GM12878 (cell line): ENCODE measurements at regions of chr10 and their contacts with region 1.

Region 1: GRCh38 chr10:74081192-74081803 is 69.3 kb downstream of the AP3M1 start:
- DNase-seq: no peak
- ATAC-seq: peak; percentile 37; the same call in 2 of the 3 replicates
- H3K4me3 ChIP-seq: no peak overlapping the region
- H3K27ac ChIP-seq: no peak overlapping the region
- H3K4me1 ChIP-seq: peaks cover 36% of the 10 kb centered on the region
- H3K27me3 ChIP-seq: no peaks in the 10 kb centered on the region
- CTCF ChIP-seq: peak; percentile 70 to 77 (median 71)
- EP300 ChIP-seq: no peak
- POLR2A ChIP-seq: no peak
- RAD21 ChIP-seq: peak; percentile 83

Region 2: GRCh38 chr10:73946253-73947155 is 134.8 kb before region 1 on chr10:
- CTCF ChIA-PET with region 1: interaction called, 102 read pairs
- POLR2A ChIA-PET with region 1: interaction called, 3 read pairs
- RAD21 ChIA-PET with region 1: interaction called, 18 read pairs
- SMC1A ChIA-PET with region 1: interaction called, 45 read pairs
- in situ Hi-C with region 1: no loop called
- intact Hi-C with region 1: no loop called
- DNase-seq: no peak
- ATAC-seq: no peak
- H3K4me3 ChIP-seq: no peak overlapping the region
- H3K27ac ChIP-seq: no peak overlapping the region
- H3K4me1 ChIP-seq: no peaks in the 10 kb centered on the region
- H3K27me3 ChIP-seq: no peaks in the 10 kb centered on the region
- CTCF ChIP-seq: no peak
- EP300 ChIP-seq: no peak
- POLR2A ChIP-seq: no peak
- RAD21 ChIP-seq: no peak

Region 3: DNA sequence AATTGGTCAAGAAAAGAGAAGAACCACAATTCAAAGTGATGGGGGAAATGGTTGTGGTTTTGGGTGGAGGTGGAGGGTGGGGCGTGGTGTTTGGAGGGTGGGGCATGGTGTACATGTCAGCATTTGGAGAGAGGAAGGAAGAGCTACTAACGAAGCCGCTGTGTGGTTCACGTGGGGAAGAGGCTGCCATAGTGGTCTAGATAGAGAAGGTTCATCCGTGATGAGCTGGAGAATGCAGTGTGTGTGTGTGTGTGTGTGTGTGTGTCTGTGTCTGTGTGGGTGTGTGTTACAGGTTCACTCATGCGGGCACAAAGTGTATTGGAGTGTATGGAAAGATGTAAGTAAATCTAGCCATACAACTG is 89.4 kb before region 1 on chr10:
- CTCF ChIA-PET with region 1: interaction called, 11 read pairs
- POLR2A ChIA-PET with region 1: interaction called, 3 read pairs
- RAD21 ChIA-PET with region 1: interaction called, 5 read pairs
- SMC1A ChIA-PET with region 1: interaction called, 18 read pairs
- in situ Hi-C with region 1: no loop called
- intact Hi-C with region 1: no loop called
- DNase-seq: no peak
- ATAC-seq: peak; percentile 96
- H3K4me3 ChIP-seq: no peak overlapping the region
- H3K27ac ChIP-seq: no peak overlapping the region
- H3K4me1 ChIP-seq: peaks cover 13% of the 10 kb centered on the region
- H3K27me3 ChIP-seq: no peaks in the 10 kb centered on the region
- CTCF ChIP-seq: no peak
- EP300 ChIP-seq: no peak
- POLR2A ChIP-seq: no peak
- RAD21 ChIP-seq: no peak

Region 4: GRCh38 chr10:74011770-74012169 is 69.5 kb before region 1 on chr10:
- CTCF ChIA-PET with region 1: interaction called, 3 read pairs
- POLR2A ChIA-PET with region 1: no interaction called
- RAD21 ChIA-PET with region 1: interaction called, 5 read pairs
- SMC1A ChIA-PET with region 1: interaction called, 26 read pairs
- in situ Hi-C with region 1: no loop called
- intact Hi-C with region 1: no loop called
- DNase-seq: no peak
- ATAC-seq: no peak
- H3K4me3 ChIP-seq: no peak overlapping the region
- H3K27ac ChIP-seq: no peak overlapping the region
- H3K4me1 ChIP-seq: peaks cover 27% of the 10 kb centered on the region
- H3K27me3 ChIP-seq: no peaks in the 10 kb centered on the region; a peak in 1 of 4 replicates
- CTCF ChIP-seq: no peak
- EP300 ChIP-seq: no peak
- POLR2A ChIP-seq: no peak
- RAD21 ChIP-seq: no peak

Region 5: DNA sequence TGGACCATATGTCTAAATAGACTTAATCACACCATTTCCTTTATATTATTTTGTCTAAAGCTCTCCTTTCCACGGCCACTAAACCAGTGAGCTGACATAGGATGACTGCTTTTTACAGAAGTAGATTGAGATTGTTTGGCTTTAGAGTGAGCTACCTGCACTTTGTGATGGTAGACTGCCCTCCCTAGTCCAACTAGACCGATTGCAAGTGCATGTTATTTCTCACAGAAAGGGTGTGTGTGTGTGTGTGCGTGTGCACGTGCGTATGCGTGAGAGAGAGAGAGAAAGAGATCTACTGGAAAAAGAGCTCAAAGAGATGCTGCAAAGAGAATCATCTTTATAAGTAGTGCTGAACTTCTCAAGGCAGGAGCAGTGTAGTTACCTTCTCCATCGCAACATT is 22.6 kb before region 1 on chr10:
- CTCF ChIA-PET with region 1: interaction called, 26 read pairs
- POLR2A ChIA-PET with region 1: interaction called, 5 read pairs
- RAD21 ChIA-PET with region 1: interaction called, 29 read pairs
- SMC1A ChIA-PET with region 1: interaction called, 71 read pairs
- in situ Hi-C with region 1: no loop called
- intact Hi-C with region 1: loop called (anchors 2 kb)
- DNase-seq: no peak
- ATAC-seq: peak; percentile 66
- H3K4me3 ChIP-seq: no peak overlapping the region
- H3K27ac ChIP-seq: no peak overlapping the region
- H3K4me1 ChIP-seq: peaks cover 23% of the 10 kb centered on the region
- H3K27me3 ChIP-seq: no peaks in the 10 kb centered on the region
- CTCF ChIP-seq: peak; percentile 4 to 44 (median 30); a peak in 3 of 6 replicates
- EP300 ChIP-seq: no peak
- POLR2A ChIP-seq: no peak
- RAD21 ChIP-seq: peak; percentile 77

Region 6: DNA sequence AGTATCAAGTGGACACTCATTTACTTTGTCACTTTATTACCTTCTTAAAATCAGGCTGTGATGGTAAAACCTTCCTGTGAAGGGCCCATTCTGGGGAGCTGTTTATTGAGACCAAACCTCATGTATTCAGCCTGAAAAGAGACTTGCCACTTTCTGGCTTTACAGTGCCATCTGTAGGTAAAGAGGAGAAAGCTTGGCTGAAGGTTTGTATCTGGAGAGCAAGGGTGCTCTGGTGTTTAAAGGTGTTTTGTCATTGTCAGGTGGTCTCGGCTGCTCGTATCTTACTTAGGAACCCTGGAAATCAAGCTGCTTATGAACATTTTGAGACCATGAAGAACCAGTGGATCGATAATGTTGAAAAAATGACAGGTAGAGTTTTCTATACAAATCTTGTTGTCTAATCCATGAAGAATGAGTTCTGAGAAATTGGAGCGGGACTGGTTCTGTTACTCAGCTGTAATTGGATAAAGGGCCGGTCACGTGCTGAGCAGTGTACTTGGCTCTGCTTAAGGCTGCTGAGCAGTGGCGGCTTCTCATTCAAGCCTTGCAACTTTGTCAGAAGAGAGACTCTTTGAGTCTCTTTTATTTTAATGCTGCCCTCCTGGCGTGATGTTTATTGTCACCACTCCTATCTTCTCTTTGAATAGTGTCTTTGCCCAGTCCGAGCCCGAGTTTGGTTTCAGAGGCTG is 22.4 kb after region 1 on chr10:
- CTCF ChIA-PET with region 1: interaction called, 53 read pairs
- POLR2A ChIA-PET with region 1: interaction called, 4 read pairs
- RAD21 ChIA-PET with region 1: interaction called, 8 read pairs
- SMC1A ChIA-PET with region 1: interaction called, 18 read pairs
- in situ Hi-C with region 1: no loop called
- intact Hi-C with region 1: no loop called
- DNase-seq: no peak
- ATAC-seq: peak; percentile 85
- H3K4me3 ChIP-seq: no peak overlapping the region
- H3K27ac ChIP-seq: no peak overlapping the region
- H3K4me1 ChIP-seq: no peaks in the 10 kb centered on the region
- H3K27me3 ChIP-seq: no peaks in the 10 kb centered on the region
- CTCF ChIP-seq: peak; percentile 52 to 71 (median 67)
- EP300 ChIP-seq: no peak
- POLR2A ChIP-seq: no peak
- RAD21 ChIP-seq: peak; percentile 84